MCF 10A (cell line): ENCODE measurements at regions of chr1 and their contacts with region 1.

Region 1: DNA sequence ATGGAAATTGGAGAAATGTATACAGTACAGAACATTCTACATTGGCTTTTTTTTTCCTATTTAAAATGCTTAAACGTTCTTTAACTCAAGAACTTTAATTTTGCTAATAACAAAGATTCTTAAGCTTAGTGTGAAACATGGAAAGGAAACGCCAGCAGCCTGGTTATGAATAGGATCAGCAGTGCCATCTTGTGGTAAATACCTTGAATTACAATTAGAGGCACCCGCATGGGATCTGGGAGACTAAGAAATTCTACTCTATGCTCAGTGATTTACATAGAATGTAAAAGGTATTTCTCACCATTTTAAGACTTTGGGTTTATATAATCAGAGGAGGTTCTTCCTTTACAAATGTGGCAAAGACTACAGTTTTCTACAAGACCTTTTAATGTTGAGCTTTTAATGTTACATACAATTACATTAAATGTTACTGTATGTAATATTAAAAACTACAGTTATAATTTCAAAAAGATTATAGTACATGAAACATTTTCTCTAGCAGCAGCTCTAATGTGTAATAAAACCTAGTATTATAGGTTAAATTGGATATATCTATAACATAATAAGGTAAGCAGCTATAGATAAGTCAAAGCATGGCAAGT is 32.1 kb upstream of the APOBEC4 start:
- DNase-seq: peak; percentile 71
- H3K4me3 Mint-ChIP-seq: no peak overlapping the region
- H3K27ac Mint-ChIP-seq: no peak overlapping the region
- H3K4me1 Mint-ChIP-seq: no peaks in the 10 kb centered on the region
- H3K27me3 Mint-ChIP-seq: no peaks in the 10 kb centered on the region
- CTCF ChIP-seq: peak; percentile 88

Region 2: DNA sequence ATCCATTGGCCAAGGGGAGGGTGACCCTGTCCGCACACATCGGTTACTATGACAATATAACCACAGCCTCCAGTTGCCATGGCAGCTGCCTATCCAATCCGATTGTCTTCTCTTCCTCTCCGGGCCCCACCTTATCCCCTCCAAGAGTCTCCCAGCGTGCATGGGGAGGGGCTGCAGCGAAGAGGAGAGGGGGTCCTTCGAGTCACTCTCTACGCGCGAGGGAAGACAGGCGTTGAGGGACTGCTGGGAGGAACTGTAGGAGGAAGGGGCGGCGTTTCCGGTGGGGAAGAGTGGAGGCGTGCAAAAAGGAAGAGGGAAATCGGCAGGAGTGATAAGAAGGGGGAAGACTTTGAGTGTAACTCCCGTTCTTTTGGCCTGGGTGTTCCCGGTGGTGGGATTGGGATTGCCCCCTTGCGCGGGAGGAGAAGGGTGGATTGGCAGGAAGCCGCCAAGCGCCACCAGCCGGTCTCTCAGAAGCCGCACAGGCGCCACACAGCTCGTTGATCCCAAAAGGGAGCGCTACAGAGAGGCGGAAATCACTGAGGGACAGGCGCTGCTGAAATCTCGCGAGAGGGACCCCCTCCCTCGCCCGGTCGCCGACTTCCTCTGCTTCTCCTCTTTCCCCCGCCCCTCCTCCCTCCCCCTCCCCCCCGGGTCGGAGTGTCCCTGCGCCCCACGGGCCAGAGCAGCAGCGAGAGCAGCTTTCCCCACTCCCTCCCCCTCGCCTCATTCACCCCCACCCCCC is 213.3 kb before region 1 on chr1:
- CTCF ChIA-PET with region 1: interaction called, 6 read pairs
- POLR2A ChIA-PET with region 1: no interaction called
- intact Hi-C with region 1: loop called (anchors 2 kb)
- DNase-seq: peak; percentile 98
- H3K4me3 Mint-ChIP-seq: peak overlapping the region; percentile 86
- H3K27ac Mint-ChIP-seq: peak overlapping the region; percentile 98
- H3K4me1 Mint-ChIP-seq: peaks cover 21% of the 10 kb centered on the region
- H3K27me3 Mint-ChIP-seq: no peaks in the 10 kb centered on the region
- CTCF ChIP-seq: no peak

Region 3: GRCh38 chr1:183580281-183580682 is 104.9 kb before region 1 on chr1:
- CTCF ChIA-PET with region 1: no interaction called
- POLR2A ChIA-PET with region 1: no interaction called
- intact Hi-C with region 1: no loop called
- DNase-seq: peak; percentile 50
- H3K4me3 Mint-ChIP-seq: no peak overlapping the region
- H3K27ac Mint-ChIP-seq: no peak overlapping the region
- H3K4me1 Mint-ChIP-seq: peaks cover 9% of the 10 kb centered on the region
- H3K27me3 Mint-ChIP-seq: no peaks in the 10 kb centered on the region
- CTCF ChIP-seq: no peak

Region 4: GRCh38 chr1:183609313-183609712 is 75.9 kb before region 1 on chr1:
- CTCF ChIA-PET with region 1: interaction called, 28 read pairs
- POLR2A ChIA-PET with region 1: interaction called, 3 read pairs
- intact Hi-C with region 1: loop called (anchors 1 kb)
- DNase-seq: peak; percentile 87
- H3K4me3 Mint-ChIP-seq: peak overlapping the region; percentile 38
- H3K27ac Mint-ChIP-seq: peak overlapping the region; percentile 99
- H3K4me1 Mint-ChIP-seq: peaks cover 31% of the 10 kb centered on the region
- H3K27me3 Mint-ChIP-seq: no peaks in the 10 kb centered on the region
- CTCF ChIP-seq: peak; percentile 69

Region 5: DNA sequence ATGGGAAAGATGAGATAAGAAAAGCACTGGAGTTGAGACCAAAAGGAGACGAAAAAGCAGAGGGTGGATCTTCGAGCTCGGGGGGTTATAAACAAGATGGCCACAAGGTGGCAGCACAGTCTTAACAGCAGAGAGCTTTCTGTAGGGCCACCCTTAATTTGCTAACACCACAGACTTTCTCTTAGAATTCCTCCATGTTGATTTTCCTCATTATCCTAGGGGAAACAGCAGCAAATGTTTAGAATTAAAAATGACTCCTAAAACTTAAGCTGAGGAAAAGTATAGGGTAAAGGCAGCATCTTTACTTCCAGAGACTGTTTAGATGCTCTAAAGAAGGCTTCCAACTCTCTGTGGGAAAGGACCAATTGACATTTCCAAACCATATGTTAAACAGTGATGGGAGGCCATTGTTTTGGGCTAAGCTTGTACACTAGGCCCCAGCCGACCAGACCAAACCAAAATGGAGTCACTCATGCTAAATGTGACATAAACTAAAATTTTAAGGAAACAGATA is 29.6 kb before region 1 on chr1:
- CTCF ChIA-PET with region 1: interaction called, 189 read pairs
- POLR2A ChIA-PET with region 1: interaction called, 18 read pairs
- intact Hi-C with region 1: loop called (anchors 1 kb)
- DNase-seq: peak; percentile 90
- H3K4me3 Mint-ChIP-seq: no peak overlapping the region
- H3K27ac Mint-ChIP-seq: peak overlapping the region; percentile 1
- H3K4me1 Mint-ChIP-seq: peaks cover 19% of the 10 kb centered on the region
- H3K27me3 Mint-ChIP-seq: no peaks in the 10 kb centered on the region
- CTCF ChIP-seq: peak; percentile 92

Region 6: DNA sequence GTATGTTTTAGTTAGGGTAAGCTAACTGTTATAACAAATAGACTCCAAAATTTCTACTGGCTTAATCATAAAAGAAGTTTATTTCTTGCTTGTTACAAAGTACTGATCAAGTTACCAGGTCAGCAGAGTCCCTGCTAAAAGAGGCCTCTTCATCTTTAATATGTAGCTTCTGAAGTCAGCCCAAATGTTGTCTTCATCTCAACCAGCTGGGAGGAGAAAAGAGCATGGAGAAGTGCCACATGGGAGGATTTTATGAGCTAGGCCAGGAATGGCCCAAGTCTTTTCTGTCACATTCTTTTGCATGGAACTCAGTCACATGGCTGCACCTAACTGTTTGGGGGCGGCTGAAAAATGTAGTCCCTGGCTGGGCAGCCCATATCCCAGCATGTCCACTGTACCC is 31.1 kb after region 1 on chr1:
- CTCF ChIA-PET with region 1: interaction called, 12 read pairs
- POLR2A ChIA-PET with region 1: no interaction called
- intact Hi-C with region 1: no loop called
- DNase-seq: no peak
- H3K4me3 Mint-ChIP-seq: no peak overlapping the region
- H3K27ac Mint-ChIP-seq: no peak overlapping the region
- H3K4me1 Mint-ChIP-seq: no peaks in the 10 kb centered on the region
- H3K27me3 Mint-ChIP-seq: no peaks in the 10 kb centered on the region
- CTCF ChIP-seq: no peak

Region 7: DNA sequence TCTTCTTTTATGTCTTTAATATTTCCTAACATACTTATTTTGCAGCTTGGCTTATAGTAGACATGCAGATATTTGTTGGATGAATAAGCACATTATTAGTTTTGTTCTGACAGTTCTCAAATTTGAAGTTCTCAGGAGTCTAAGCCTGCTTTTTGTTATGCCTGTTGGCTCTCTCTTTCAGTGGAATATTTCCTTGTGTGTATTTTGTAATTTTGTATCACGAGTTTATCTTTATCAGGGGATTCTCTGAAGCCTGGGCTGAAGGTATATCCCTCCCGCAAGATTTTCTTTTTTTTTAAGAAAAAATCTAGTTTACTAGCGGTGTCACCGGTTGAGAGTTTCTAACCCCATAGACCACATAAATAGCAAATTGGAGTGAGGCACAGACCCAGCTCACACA is 225.6 kb after region 1 on chr1:
- CTCF ChIA-PET with region 1: interaction called, 60 read pairs
- POLR2A ChIA-PET with region 1: interaction called, 8 read pairs
- intact Hi-C with region 1: loop called (anchors 1 kb)
- DNase-seq: no peak
- H3K4me3 Mint-ChIP-seq: no peak overlapping the region
- H3K27ac Mint-ChIP-seq: no peak overlapping the region
- H3K4me1 Mint-ChIP-seq: peaks cover 5% of the 10 kb centered on the region
- H3K27me3 Mint-ChIP-seq: no peaks in the 10 kb centered on the region
- CTCF ChIP-seq: no peak

Region 8: DNA sequence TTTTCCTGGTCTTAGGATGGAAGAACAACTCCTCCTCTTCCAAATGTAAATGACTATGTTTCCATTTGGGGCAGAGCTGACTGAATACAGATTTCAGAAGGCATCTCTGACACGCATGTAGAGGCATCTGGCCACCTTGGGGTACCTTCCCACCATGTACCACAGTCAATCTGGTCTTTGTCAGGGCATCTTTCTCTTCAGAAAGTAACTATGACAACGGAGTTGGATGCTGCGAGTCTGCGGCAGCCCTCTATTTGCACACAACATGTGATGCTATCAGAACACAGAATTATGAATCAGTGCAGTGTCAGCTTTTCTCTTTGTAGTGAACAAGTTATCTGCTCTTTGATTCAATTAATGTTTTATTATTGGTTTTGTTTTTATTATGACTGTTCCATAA is 461.0 kb after region 1 on chr1:
- CTCF ChIA-PET with region 1: no interaction called
- POLR2A ChIA-PET with region 1: no interaction called
- intact Hi-C with region 1: no loop called
- DNase-seq: no peak
- H3K4me3 Mint-ChIP-seq: no peak overlapping the region
- H3K27ac Mint-ChIP-seq: no peak overlapping the region
- H3K4me1 Mint-ChIP-seq: no peaks in the 10 kb centered on the region
- H3K27me3 Mint-ChIP-seq: peaks cover 26% of the 10 kb centered on the region
- CTCF ChIP-seq: no peak